Sciatic nerve (tissue), 2 donors: ENCODE measurements at regions of chr14 and their contacts with region 1.

Region 1: GRCh38 chr14:53055003-53055402 is 98.1 kb downstream of the DDHD1 start:
- DNase-seq: no peak
- ATAC-seq: peak; percentile 88

Region 2: DNA sequence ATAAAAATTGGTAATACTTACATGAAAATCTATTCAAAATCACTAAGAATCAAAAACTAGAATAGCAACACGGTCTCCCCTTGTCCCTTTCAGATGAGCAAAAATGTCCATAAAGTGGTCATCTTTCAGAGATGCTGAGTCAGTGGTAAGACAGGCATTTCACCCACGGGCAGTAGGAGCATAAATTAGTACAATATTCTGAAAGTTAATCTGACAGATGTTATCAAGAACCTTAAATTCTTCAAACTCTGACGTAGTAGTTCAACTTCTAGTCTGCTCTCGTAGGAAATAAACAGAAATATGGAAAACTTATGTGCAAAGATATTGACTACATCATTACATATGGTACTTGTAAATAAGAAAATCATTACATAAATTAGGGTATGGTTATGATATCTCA is 230.5 kb before region 1 on chr14:
- intact Hi-C with region 1: loop called (anchors 5 kb)
- DNase-seq: no peak
- ATAC-seq: no peak

Region 3: DNA sequence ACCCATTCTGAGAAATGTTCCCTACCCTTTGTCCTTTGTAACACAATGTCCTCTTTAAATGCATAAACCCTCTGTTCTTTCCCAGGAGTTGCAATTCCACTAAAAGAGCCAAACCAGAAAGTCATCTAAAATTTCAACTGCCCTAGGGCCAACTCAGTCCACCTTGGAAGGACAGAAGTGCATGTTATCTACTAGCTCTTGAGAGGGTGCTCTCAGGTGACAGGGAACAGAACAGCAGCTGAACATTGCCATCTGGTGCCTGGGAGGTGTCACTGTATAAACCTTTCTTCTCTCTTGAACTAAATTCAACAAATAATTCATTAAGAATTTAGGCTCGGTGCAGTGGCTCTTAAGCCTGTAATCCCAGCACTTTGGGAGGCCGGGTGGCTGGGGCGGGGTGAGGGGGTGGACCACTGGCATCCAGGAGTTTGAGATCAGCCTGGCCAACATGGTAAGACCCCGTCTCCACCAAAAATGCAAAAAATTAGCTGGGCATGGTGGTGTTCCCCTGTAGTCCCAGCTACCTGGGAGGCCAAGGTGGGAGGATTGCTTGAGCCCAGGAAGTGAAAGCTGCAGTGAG is 93.9 kb before region 1 on chr14:
- intact Hi-C with region 1: loop called (anchors 10 kb)
- DNase-seq: peak; percentile 66
- ATAC-seq: peak; percentile 92

Region 4: GRCh38 chr14:53011053-53011462 is 43.9 kb before region 1 on chr14:
- intact Hi-C with region 1: no loop called
- DNase-seq: peak; percentile 88
- ATAC-seq: peak; percentile 98

Region 5: DNA sequence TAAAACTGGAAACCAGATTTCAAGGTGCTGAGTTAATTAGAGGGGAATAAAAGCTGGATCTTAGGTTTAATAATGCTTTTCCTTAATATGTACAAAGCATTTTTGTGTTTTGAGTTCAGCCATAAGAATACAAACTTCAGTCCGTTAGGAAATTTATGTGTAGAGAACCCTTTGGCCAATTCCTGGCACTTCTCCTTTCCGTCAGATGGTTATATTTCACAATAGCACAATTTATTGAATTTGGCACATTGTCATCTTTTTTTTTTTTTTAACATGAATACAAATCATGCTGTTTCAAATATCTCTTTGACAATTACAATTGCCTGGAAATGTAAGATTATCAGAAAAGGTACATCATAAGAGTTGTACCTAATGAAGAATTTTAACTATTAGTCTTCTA is 154.4 kb after region 1 on chr14:
- intact Hi-C with region 1: no loop called
- DNase-seq: no peak
- ATAC-seq: peak; percentile 83